Transverse colon (tissue), 4 donors: ENCODE measurements at regions of chr1 and their contacts with region 1.

Region 1: GRCh38 chr1:201792534-201793305 is 36.2 kb upstream of the IPO9 start:
- DNase-seq: peak; percentile 78
- H3K4me3 ChIP-seq: no peak overlapping the region
- H3K27ac ChIP-seq: peak overlapping the region; percentile 57 to 81 (median 74)
- H3K4me1 ChIP-seq: peaks cover 13 to 33% (median 19%) of the 10 kb centered on the region in 4 donors
- H3K27me3 ChIP-seq: no peaks in the 10 kb centered on the region
- CTCF ChIP-seq: peak; percentile 93 to 98 (median 96)
- EP300 ChIP-seq: no peak
- POLR2A ChIP-seq: no peak

Region 2: DNA sequence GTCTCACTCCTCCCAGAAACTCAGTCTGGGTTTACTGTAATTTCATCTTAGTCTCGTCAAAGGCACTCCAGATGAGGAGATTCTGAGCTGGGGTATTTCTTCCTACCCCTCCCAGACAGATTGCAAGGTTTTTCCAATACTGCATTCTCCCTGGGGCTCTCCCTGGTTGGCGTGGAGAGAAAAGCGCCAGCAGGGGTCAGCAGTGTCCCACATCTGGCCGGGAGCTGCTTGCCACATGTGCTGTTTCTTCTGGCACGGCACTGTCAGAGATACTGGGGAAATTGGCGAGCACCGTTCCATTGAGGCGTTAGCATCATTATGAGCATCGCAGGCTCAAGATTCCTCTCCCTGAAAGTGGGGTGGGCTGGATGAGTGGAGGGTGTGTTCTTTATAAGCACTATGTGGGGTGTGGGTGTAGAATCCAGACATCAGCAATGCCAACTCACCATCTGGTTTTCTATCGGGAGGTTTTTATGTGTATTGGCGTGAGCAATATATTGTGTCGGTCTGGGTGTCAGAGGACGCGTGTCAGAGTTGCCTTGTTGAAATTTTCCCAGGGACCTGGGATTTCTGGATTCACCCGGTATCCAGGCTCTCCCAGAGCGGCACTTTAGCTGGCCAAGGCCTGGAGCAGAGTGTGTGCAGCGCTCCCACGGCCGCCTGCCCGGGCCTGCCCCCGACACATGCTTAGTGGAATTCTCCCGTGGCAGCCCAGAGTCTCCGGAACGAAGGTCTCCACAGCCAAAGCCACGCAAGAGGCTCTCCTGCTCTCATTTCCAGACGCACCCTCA is 261.8 kb before region 1 on chr1:
- in situ Hi-C with region 1: no loop called
- intact Hi-C with region 1: loop called (anchors 2 kb)
- DNase-seq: peak; percentile 78
- H3K4me3 ChIP-seq: no peak overlapping the region
- H3K27ac ChIP-seq: peak overlapping the region; percentile 28 to 53 (median 44)
- H3K4me1 ChIP-seq: peaks cover 0 to 35% (median 5%) of the 10 kb centered on the region in 4 donors
- H3K27me3 ChIP-seq: no peaks in the 10 kb centered on the region
- CTCF ChIP-seq: peak; percentile 62 to 75 (median 71)
- EP300 ChIP-seq: no peak
- POLR2A ChIP-seq: no peak